OCI-LY7 (cell line): ENCODE measurements at regions of chr13 and their contacts with region 1.

Region 1: GRCh38 chr13:72737033-72737432 is 9.3 kb downstream of the BORA start:
- DNase-seq: no peak
- H3K4me3 ChIP-seq: no peak overlapping the region
- H3K27ac ChIP-seq: no peak overlapping the region
- H3K4me1 ChIP-seq: no peaks in the 10 kb centered on the region
- CTCF ChIP-seq: no peak

Region 2: DNA sequence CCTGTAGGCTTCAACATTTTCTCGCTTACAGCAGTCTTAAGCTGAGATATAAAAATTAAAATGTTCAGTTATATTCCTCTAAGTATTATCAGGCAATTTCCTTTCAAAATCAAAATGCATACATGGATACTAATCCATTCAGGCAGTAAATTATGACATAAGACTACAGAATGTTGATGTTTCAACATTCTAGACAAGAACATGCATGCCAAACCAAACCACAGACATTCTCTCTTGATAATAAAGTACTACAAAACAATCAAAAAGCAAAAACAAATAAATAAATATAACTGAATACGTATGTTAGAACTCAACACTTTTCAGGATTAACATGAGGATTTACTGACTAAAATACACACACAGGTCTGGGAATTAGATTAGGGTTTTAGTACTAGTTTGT is 37.0 kb after region 1 on chr13:
- CTCF ChIA-PET with region 1: no interaction called
- POLR2A ChIA-PET with region 1: no interaction called
- intact Hi-C with region 1: loop called (anchors 5 kb)
- DNase-seq: no peak
- H3K4me3 ChIP-seq: no peak overlapping the region
- H3K27ac ChIP-seq: no peak overlapping the region
- H3K4me1 ChIP-seq: peaks cover 10% of the 10 kb centered on the region
- CTCF ChIP-seq: no peak